ENCODE measurements at regions of chr10 and their contacts with region 1.

Region 1: GRCh38 chr10:112711366-112711765 is 238.7 kb upstream of the TCF7L2 start:
- DNase-seq: peak in 1 of 2 experiments; percentile 7
- ATAC-seq: no peak
- H3K4me3 ChIP-seq: no peak overlapping the region
- H3K27ac ChIP-seq: no peak overlapping the region
- H3K4me1 ChIP-seq: peaks cover 14% of the 10 kb centered on the region
- CTCF ChIP-seq: no peak
- EP300 ChIP-seq: no peak
- POLR2A ChIP-seq: no peak
- RAD21 ChIP-seq: no peak

Region 2: GRCh38 chr10:112631501-112632410 is 79.6 kb before region 1 on chr10:
- CTCF ChIA-PET with region 1: no interaction called
- POLR2A ChIA-PET with region 1: no interaction called
- DNase-seq: no peak
- ATAC-seq: no peak; a peak in 1 of 6 replicates
- H3K4me3 ChIP-seq: no peak overlapping the region
- H3K27ac ChIP-seq: peak overlapping the region in 1 of 2 experiments; percentile 56; a peak in 1 of 6 replicates
- H3K4me1 ChIP-seq: peaks cover 27% of the 10 kb centered on the region
- CTCF ChIP-seq: no peak
- EP300 ChIP-seq: no peak
- POLR2A ChIP-seq: no peak
- RAD21 ChIP-seq: no peak

Region 3: DNA sequence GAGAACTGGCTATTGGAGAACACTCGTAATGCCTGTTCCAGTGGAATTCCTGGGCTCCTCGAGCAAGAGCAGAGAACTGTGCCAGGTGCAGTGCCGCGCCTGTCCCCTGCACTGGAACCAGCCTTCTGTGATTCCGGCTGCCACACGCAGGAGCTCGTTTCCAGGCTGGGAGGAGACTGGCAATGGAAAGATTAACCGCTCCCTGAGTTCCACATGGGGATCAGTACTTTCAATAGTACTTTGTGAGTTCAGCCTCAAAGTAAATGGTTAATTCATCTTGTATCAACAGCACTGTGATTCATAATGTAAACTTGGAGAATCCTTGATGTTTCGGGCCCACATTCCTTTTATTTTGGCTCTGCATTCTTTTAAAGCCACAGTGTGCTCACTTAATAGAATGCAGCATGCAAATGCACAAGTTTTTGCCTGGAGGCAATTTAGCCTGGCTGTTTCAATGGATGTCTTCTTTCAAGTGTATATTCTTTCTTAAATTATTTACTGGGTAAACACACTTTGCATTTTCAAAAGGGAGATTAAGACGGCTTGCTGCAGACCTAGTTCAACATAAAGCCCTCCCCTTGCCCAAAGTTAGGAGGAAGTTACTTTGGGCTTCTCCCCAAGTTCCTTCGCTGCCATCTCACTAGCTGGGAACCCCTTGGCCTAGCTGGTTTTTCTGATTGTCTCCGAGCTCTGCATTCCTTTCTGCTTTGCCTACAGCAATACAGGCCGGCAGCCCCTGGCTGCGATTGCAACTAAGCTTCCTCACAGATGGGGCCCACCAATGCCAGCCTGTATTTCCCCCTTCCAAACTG is 100.6 kb after region 1 on chr10:
- CTCF ChIA-PET with region 1: no interaction called
- POLR2A ChIA-PET with region 1: interaction called, 12 read pairs
- DNase-seq: peak; percentile 96 to 97
- ATAC-seq: peak; percentile 96 to 97
- H3K4me3 ChIP-seq: 0 out of 3 replicates have a peak overlapping the region, but pooled peaks have one; percentile 7
- H3K27ac ChIP-seq: peak overlapping the region; percentile 84 to 88
- H3K4me1 ChIP-seq: peaks cover 31% of the 10 kb centered on the region
- CTCF ChIP-seq: no peak
- EP300 ChIP-seq: peak; percentile 82 to 89; a peak in 4 of 5 replicates
- POLR2A ChIP-seq: no peak
- RAD21 ChIP-seq: peak; percentile 51 to 67